Naive thymus-derived CD4-positive, alpha-beta T cell (primary cell): ENCODE measurements at regions of chr10 and their contacts with region 1.

Region 1: GRCh38 chr10:22003079-22003913 is at the start of gene DNAJC1:
- DNase-seq: peak; percentile 94 to 99 (median 97)
- ATAC-seq: peak; percentile 97
- H3K4me3 ChIP-seq: peak within 1 kb of the TSS; percentile 87
- H3K4me3 Mint-ChIP-seq: peak within 1 kb of the TSS; percentile 81 to 99 (median 94)
- H3K27ac ChIP-seq: peak within 1 kb of the TSS; percentile 82
- H3K27ac Mint-ChIP-seq: peak within 1 kb of the TSS; percentile 78 to 94 (median 92)
- H3K4me1 ChIP-seq: peaks cover 18 to 19% of the 10 kb centered on the region in 2 donors
- H3K4me1 Mint-ChIP-seq: peaks cover 7 to 42% (median 29%) of the 10 kb centered on the region in 7 donors
- H3K27me3 ChIP-seq: no peaks in the 10 kb centered on the region
- H3K27me3 Mint-ChIP-seq: peaks cover 0 to 15% (median 4%) of the 10 kb centered on the region in 5 donors
- total RNA-seq, gene DNAJC1: 11.0 to 23.9 (median 12.1) TPM

Region 2: DNA sequence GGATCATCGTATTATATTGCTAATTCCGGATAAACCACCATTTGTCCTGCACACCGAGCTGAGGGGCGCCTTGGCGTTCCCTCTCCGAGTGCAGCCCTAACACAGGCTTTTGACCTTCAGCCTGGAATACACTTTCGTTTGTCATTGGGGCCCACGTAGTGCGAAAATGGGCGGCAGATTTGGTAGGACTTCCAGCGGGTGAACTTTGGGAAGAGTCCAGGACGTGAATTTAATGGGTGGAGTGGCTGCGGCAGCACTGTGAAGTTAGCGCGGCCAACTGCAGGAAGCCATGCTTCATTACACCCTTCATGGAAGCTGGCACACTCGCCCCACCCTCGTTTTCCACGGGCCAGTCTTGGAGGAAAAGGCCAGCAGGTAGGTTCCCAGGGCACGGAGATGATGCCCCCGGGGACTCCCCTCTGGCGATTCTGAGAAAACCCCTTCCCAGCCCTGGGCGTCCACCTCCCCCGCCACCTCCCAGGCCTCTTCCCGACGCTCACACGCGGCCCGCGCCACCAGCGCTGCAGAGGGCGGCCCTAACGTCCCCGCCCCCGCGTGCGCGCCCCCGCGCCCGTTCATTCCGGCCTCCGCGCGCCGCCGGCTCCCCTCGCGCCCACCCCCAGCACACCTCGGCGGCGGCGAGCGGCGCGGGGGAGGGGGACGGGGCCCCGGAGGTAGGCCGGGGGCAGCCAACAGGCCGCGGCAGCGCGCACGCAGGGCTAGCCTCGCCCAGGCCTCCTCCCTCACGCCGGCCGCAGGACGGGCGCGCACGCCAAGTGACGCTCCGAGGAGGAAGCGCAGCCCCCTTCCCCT is 469.6 kb before region 1 on chr10 and contains the start of gene MLLT10:
- CTCF ChIA-PET with region 1: no interaction called
- POLR2A ChIA-PET with region 1: interaction called, 4 read pairs
- intact Hi-C with region 1: loop called (anchors 1 to 2 kb)
- DNase-seq: peak; percentile 90 to 96 (median 94)
- ATAC-seq: peak; percentile 95
- H3K4me3 ChIP-seq: peak within 1 kb of the TSS; percentile 81
- H3K4me3 Mint-ChIP-seq: peak within 1 kb of the TSS; percentile 90 to 98 (median 97)
- H3K27ac ChIP-seq: peak within 1 kb of the TSS; percentile 83
- H3K27ac Mint-ChIP-seq: peak within 1 kb of the TSS; percentile 91 to 98 (median 97)
- H3K4me1 ChIP-seq: peaks cover 8 to 15% of the 10 kb centered on the region in 2 donors
- H3K4me1 Mint-ChIP-seq: peaks cover 14 to 36% (median 27%) of the 10 kb centered on the region in 7 donors
- H3K27me3 ChIP-seq: no peaks in the 10 kb centered on the region
- H3K27me3 Mint-ChIP-seq: peaks cover 0 to 18% (median 0%) of the 10 kb centered on the region in 5 donors
- total RNA-seq, gene MLLT10: 50.0 to 74.2 (median 67.9) TPM

Region 3: DNA sequence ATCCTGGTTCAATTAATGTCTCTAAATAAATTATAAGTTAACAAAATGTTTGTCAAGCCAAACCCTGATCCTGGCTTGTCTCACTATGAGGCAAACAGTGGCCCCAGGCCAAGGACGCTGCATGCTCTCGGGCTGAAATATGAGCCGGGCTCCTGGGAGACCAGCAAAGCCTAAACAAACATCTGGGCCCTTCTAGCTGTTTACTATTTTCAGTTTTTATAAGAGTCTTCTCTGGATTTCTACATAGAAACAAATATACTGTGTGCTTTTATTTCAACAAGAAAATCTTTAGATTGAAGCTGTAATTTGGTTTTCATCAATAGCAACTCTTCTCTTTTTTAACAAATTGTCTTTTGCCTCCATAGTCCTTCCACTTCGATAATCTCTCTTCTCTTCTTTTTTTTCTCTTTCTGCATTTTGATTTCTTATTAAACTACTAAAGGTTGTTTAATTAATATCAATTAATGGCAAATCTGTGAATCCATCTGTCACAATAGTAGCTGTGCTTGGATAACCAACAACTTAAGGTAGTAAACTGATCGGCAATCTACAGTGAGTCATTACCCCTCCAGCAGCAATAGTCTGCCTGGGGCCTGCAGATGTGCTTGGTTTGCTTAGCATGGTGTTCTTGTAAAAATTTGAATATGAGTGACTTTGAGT is 83.6 kb after region 1 on chr10:
- CTCF ChIA-PET with region 1: no interaction called
- POLR2A ChIA-PET with region 1: no interaction called
- intact Hi-C with region 1: no loop called
- DNase-seq: no peak
- ATAC-seq: no peak
- H3K4me3 ChIP-seq: no peak overlapping the region
- H3K4me3 Mint-ChIP-seq: no peak overlapping the region
- H3K27ac ChIP-seq: no peak overlapping the region
- H3K27ac Mint-ChIP-seq: no peak overlapping the region
- H3K4me1 ChIP-seq: no peaks in the 10 kb centered on the region
- H3K4me1 Mint-ChIP-seq: peaks cover 0 to 4% (median 0%) of the 10 kb centered on the region in 7 donors
- H3K27me3 ChIP-seq: no peaks in the 10 kb centered on the region
- H3K27me3 Mint-ChIP-seq: peaks cover 11 to 31% (median 25%) of the 10 kb centered on the region in 5 donors

Region 4: DNA sequence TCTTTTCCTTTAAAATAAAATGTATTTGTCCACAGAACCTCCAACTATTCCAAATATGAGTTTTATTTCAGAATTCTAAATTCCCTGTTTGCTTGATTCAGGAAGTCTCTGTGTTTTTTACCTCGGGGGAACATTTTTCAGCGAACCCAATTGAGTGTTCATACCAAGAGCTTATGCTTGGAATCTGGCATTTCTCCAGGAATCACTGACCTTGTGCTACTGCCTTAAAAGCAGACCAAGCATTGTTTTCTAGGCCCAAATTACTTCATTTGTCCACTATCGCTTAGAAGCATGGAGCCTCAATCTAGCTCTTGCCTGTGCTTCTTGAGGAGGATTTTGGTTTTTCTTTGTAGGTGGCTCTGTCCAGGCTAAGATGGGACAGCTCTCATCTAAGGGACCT is 155.1 kb after region 1 on chr10:
- CTCF ChIA-PET with region 1: no interaction called
- POLR2A ChIA-PET with region 1: no interaction called
- intact Hi-C with region 1: loop called in 1 of 2 experiments (anchors 5 kb)
- DNase-seq: no peak
- ATAC-seq: no peak
- H3K4me3 ChIP-seq: no peak overlapping the region
- H3K4me3 Mint-ChIP-seq: peak overlapping the region in 3 of 10 donors; percentile 10 to 76 (median 65)
- H3K27ac ChIP-seq: no peak overlapping the region
- H3K27ac Mint-ChIP-seq: peak overlapping the region in 1 of 9 donors; percentile 62
- H3K4me1 ChIP-seq: no peaks in the 10 kb centered on the region
- H3K4me1 Mint-ChIP-seq: peaks cover 7 to 22% (median 12%) of the 10 kb centered on the region in 7 donors
- H3K27me3 ChIP-seq: no peaks in the 10 kb centered on the region
- H3K27me3 Mint-ChIP-seq: no peaks in the 10 kb centered on the region

Region 5: GRCh38 chr10:22285130-22285529 is 281.8 kb after region 1 on chr10:
- CTCF ChIA-PET with region 1: no interaction called
- POLR2A ChIA-PET with region 1: no interaction called
- intact Hi-C with region 1: no loop called
- DNase-seq: no peak
- ATAC-seq: no peak
- H3K4me3 ChIP-seq: no peak overlapping the region
- H3K4me3 Mint-ChIP-seq: no peak overlapping the region
- H3K27ac ChIP-seq: no peak overlapping the region
- H3K27ac Mint-ChIP-seq: no peak overlapping the region
- H3K4me1 ChIP-seq: no peaks in the 10 kb centered on the region
- H3K4me1 Mint-ChIP-seq: no peaks in the 10 kb centered on the region
- H3K27me3 ChIP-seq: no peaks in the 10 kb centered on the region
- H3K27me3 Mint-ChIP-seq: peaks cover 0 to 9% (median 3%) of the 10 kb centered on the region in 5 donors

Region 6: DNA sequence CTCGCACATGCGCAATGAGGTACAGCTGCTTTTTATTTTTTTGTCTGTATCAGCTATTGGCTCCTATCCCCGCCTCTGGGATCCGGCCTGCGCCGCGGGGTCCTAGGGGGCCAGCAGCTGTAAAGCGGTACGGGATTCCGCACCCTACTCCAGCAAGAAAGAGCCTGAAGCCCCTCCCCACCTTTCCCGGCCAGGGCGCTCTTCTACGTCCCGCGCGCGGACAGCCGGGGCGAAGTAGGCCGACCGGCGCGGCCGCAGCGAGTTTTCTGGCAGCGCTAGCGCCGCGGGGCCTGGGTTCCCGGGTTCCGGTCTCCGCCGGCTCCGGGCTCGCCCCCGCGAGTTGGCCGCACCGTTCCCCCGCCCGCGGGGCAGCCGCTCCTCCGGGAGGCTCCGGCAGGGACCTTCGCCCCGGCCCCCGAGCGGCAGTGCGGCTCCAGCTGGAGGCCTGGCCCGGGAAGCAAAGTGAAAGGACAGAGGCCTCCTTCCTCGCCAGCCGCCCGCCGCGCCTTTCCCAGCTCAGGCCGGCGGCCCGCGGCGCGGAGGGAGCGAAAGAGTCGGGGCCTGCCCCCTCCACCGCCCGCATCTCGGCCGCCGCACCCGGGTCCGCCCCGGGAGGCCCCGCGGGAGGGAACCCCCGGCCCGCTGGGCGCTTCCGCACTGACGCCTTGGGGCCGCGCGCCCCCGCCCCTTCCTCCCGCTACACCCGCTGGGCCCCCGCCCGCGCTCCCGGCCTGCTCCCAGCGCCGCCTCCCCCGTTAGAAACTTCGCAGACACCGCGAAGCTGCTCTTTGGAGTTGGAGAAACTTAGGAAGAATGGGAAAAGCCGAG is 337.3 kb after region 1 on chr10:
- CTCF ChIA-PET with region 1: no interaction called
- POLR2A ChIA-PET with region 1: interaction called, 6 read pairs
- intact Hi-C with region 1: loop called in 1 of 2 experiments (anchors 1 kb)
- DNase-seq: peak in 8 of 9 donors; percentile 41 to 80 (median 58)
- ATAC-seq: peak; percentile 59
- H3K4me3 ChIP-seq: peak overlapping the region; percentile 41
- H3K4me3 Mint-ChIP-seq: peak overlapping the region; percentile 80 to 89 (median 86)
- H3K27ac ChIP-seq: peak overlapping the region; percentile 20
- H3K27ac Mint-ChIP-seq: peak overlapping the region; percentile 56 to 93 (median 89)
- H3K4me1 ChIP-seq: peaks cover 24 to 26% of the 10 kb centered on the region in 2 donors
- H3K4me1 Mint-ChIP-seq: peaks cover 0 to 54% (median 18%) of the 10 kb centered on the region in 7 donors
- H3K27me3 ChIP-seq: peaks cover 51 to 91% of the 10 kb centered on the region in 2 donors
- H3K27me3 Mint-ChIP-seq: peaks cover 59 to 79% (median 74%) of the 10 kb centered on the region in 5 donors